ENCODE measurements at regions of chr11 and their contacts with region 1.

Region 1: DNA sequence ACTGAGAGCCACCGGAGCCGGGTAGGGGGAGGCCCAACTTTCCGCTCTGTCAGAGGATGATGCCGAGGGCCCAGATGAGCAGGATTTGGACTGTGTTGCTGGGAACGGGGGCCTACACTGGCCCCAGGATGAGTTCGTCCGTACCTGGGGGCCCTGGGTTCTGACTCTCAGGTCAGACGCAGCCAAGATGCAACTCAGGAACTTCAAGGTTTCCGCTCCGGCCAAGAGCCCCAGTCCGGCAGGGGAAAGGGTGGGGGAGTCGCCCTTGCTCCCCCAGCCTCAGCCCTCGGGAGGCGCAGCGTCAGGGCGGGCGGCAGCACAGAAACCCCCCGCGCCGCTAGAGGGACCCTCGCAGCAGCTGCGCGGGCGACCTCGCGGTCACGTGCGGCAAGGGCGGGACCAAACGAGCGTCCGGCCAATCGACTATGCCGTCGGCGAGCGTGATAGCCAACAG is 241 bp upstream of the ARL2 start:
- DNase-seq: peak; percentile 96
- ATAC-seq: peak; percentile 80
- H3K4me3 ChIP-seq: peak overlapping the region; percentile 17 to 92 (median 83)
- H3K4me3 Mint-ChIP-seq: peak overlapping the region; percentile 92
- H3K27ac ChIP-seq: peak overlapping the region; percentile 93 to 98
- H3K27ac Mint-ChIP-seq: peak overlapping the region; percentile 98
- H3K4me1 ChIP-seq: peaks cover 9 to 35% of the 10 kb centered on the region in 2 donors
- H3K4me1 Mint-ChIP-seq: peaks cover 23% of the 10 kb centered on the region
- H3K27me3 ChIP-seq: no peaks in the 10 kb centered on the region
- H3K27me3 Mint-ChIP-seq: no peaks in the 10 kb centered on the region
- CTCF ChIP-seq: no peak

Region 2: DNA sequence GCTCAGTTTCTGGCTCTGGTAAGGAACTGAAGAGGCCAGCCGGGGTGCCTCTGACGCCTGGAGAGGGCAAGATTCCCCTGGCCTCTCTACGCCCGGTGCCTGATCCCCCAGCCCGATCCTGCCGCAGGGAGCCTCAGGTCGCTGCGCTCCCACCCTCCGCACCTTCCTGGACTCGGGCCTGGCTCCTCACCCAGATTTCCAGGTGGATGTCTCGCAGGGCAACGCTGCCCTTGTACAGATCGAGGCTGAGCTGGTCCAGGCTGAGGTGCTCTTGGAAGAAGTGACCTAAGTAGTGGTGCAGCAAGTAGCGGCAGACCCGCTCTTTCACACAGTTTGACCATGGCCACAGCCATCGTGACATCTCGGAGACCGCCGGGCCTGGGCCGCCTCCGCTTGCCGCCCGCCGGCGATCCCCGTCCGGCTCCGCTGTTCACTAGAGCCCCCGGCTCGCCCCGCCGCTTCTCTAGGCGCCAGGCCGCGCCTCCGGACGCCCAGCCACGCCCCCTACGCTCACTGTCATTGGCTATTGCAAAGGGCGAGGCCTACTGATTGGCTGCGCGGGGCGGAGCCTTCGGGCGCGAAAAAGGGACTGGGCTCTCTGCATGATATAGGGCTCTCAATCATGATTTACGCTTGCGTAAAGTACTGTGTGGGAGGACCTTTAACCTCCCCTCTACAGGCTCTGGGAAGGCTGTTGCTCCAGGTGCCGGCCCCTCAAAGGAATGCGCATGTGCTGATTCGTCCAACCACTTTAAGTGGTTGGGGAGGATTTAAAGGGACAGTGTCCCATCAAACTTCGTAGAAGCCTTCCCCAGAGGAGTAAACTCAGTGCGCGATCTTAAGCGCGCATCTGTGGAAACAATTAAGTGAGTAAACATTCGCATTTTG is 96.7 kb before region 1 on chr11 and contains the start of gene ATG2A:
- CTCF ChIA-PET with region 1: interaction called, 4 read pairs
- POLR2A ChIA-PET with region 1: interaction called, 4 read pairs
- intact Hi-C with region 1: loop called (anchors 1 kb)
- DNase-seq: peak; percentile 99
- ATAC-seq: peak; percentile 97
- H3K4me3 ChIP-seq: peak within 1 kb of the TSS; percentile 86 to 96 (median 90)
- H3K4me3 Mint-ChIP-seq: peak within 1 kb of the TSS; percentile 88
- H3K27ac ChIP-seq: peak within 1 kb of the TSS; percentile 44 to 84
- H3K27ac Mint-ChIP-seq: peak within 1 kb of the TSS; percentile 91
- H3K4me1 ChIP-seq: peaks cover 19 to 33% of the 10 kb centered on the region in 2 donors
- H3K4me1 Mint-ChIP-seq: peaks cover 34% of the 10 kb centered on the region
- H3K27me3 ChIP-seq: no peaks in the 10 kb centered on the region
- H3K27me3 Mint-ChIP-seq: no peaks in the 10 kb centered on the region
- CTCF ChIP-seq: no peak
- total RNA-seq, gene ATG2A: 38.6 and 43.4 TPM in 2 replicates

Region 3: GRCh38 chr11:64996710-64997380 is 16.9 kb before region 1 on chr11 and contains the start of gene BATF2:
- CTCF ChIA-PET with region 1: interaction called, 24 read pairs
- POLR2A ChIA-PET with region 1: interaction called, 5 read pairs
- intact Hi-C with region 1: no loop called
- DNase-seq: peak; percentile 73
- ATAC-seq: peak; percentile 90
- H3K4me3 ChIP-seq: peak within 1 kb of the TSS in 4 of 5 experiments; percentile 42 to 67 (median 53)
- H3K4me3 Mint-ChIP-seq: peak within 1 kb of the TSS; percentile 77
- H3K27ac ChIP-seq: peak within 1 kb of the TSS in 1 of 2 donors; percentile 60
- H3K27ac Mint-ChIP-seq: peak within 1 kb of the TSS; percentile 74
- H3K4me1 ChIP-seq: peaks cover 15 to 17% of the 10 kb centered on the region in 2 donors
- H3K4me1 Mint-ChIP-seq: peaks cover 26% of the 10 kb centered on the region
- H3K27me3 ChIP-seq: no peaks in the 10 kb centered on the region
- H3K27me3 Mint-ChIP-seq: no peaks in the 10 kb centered on the region
- CTCF ChIP-seq: peak; percentile 25
- total RNA-seq, gene BATF2: 0.51 and 0.62 TPM in 2 replicates

Region 4: DNA sequence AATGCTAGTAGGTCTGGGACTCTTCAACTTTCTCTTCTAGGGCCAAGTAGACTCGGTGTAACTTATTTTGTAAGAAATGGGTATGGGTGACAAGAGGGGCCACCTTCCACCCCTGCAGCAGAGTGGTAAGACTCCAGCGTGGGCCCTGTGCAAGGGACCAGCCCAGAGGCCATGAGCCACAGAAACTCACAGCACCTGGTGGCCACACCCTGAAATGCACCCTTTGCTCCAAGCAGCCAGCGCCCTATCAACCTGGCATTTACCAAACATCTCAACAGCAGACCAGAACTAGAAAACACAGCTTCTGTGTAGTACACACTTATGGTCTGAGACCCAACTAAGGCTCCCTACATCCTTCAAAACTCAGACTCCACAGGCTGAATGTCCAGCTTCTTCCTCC is 64.4 kb after region 1 on chr11:
- CTCF ChIA-PET with region 1: interaction called, 5 read pairs
- POLR2A ChIA-PET with region 1: no interaction called
- intact Hi-C with region 1: loop called (anchors 1 kb)
- DNase-seq: peak; percentile 76
- ATAC-seq: peak; percentile 99
- H3K4me3 ChIP-seq: no peak overlapping the region
- H3K4me3 Mint-ChIP-seq: no peak overlapping the region
- H3K27ac ChIP-seq: peak overlapping the region in 1 of 2 donors; percentile 0
- H3K27ac Mint-ChIP-seq: peak overlapping the region; percentile 56
- H3K4me1 ChIP-seq: peaks cover 0 to 11% of the 10 kb centered on the region in 2 donors
- H3K4me1 Mint-ChIP-seq: peaks cover 8% of the 10 kb centered on the region
- H3K27me3 ChIP-seq: no peaks in the 10 kb centered on the region
- H3K27me3 Mint-ChIP-seq: no peaks in the 10 kb centered on the region
- CTCF ChIP-seq: peak; percentile 71

Region 5: DNA sequence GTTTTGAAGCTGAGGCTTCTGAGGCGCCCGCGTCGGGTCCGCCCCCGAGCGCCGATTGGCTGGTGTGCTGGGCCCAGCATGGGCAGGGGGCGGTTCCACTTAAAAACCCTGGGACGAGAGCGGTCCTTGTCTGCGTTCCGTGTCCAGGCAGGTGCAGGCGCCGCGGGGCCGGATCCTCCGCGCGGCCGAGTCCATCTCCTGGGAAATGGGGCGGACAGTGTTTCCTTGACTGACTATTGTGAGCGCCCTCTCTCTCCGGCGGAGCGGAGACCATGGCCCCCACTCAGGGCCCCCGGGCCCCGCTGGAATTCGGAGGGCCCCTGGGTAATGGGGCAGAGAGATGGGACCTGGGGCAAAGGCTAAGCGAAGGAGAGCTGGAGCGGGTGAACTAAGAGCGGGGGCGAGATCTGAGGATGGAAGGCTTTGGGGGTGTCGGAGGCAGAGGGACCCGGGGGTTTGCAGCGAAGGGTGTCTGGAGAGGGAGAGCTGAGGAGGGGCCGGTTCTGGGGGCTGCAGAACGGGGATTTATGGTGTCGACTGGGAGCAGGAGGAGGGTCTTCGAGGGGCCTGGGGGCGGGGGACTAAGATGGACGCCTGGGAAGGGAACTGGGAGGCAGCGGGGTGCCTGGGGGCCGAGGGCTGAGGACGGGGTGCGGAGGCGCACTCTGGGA is 98.2 kb after region 1 on chr11 and contains the start of gene TM7SF2:
- CTCF ChIA-PET with region 1: interaction called, 21 read pairs
- POLR2A ChIA-PET with region 1: interaction called, 8 read pairs
- intact Hi-C with region 1: loop called (anchors 1 kb)
- DNase-seq: peak; percentile 94
- ATAC-seq: peak; percentile 81
- H3K4me3 ChIP-seq: peak within 1 kb of the TSS; percentile 16 to 92 (median 68)
- H3K4me3 Mint-ChIP-seq: peak within 1 kb of the TSS; percentile 89
- H3K27ac ChIP-seq: peak within 1 kb of the TSS; percentile 44 to 54
- H3K27ac Mint-ChIP-seq: peak within 1 kb of the TSS; percentile 84
- H3K4me1 ChIP-seq: peaks cover 28 to 51% of the 10 kb centered on the region in 2 donors
- H3K4me1 Mint-ChIP-seq: peaks cover 51% of the 10 kb centered on the region
- H3K27me3 ChIP-seq: no peaks in the 10 kb centered on the region
- H3K27me3 Mint-ChIP-seq: no peaks in the 10 kb centered on the region
- CTCF ChIP-seq: no peak
- total RNA-seq, gene TM7SF2: 28.5 and 35.3 TPM in 2 replicates

Region 6: GRCh38 chr11:65261591-65262380 is 248.1 kb after region 1 on chr11 and contains the start of gene POLA2:
- CTCF ChIA-PET with region 1: interaction called, 5 read pairs
- POLR2A ChIA-PET with region 1: no interaction called
- intact Hi-C with region 1: loop called (anchors 1 kb)
- DNase-seq: peak; percentile 98
- ATAC-seq: peak; percentile 88
- H3K4me3 ChIP-seq: peak within 1 kb of the TSS; percentile 85 to 97 (median 94)
- H3K4me3 Mint-ChIP-seq: peak within 1 kb of the TSS; percentile 94
- H3K27ac ChIP-seq: peak within 1 kb of the TSS; percentile 88 to 91
- H3K27ac Mint-ChIP-seq: peak within 1 kb of the TSS; percentile 99
- H3K4me1 ChIP-seq: peaks cover 11 to 18% of the 10 kb centered on the region in 2 donors
- H3K4me1 Mint-ChIP-seq: peaks cover 24% of the 10 kb centered on the region
- H3K27me3 ChIP-seq: no peaks in the 10 kb centered on the region
- H3K27me3 Mint-ChIP-seq: no peaks in the 10 kb centered on the region
- CTCF ChIP-seq: no peak
- total RNA-seq, gene POLA2: 28.7 and 33.2 TPM in 2 replicates